Posterior vena cava (tissue), 2 donors: ENCODE measurements at regions of chr5 and their contacts with region 1.

Region 1: DNA sequence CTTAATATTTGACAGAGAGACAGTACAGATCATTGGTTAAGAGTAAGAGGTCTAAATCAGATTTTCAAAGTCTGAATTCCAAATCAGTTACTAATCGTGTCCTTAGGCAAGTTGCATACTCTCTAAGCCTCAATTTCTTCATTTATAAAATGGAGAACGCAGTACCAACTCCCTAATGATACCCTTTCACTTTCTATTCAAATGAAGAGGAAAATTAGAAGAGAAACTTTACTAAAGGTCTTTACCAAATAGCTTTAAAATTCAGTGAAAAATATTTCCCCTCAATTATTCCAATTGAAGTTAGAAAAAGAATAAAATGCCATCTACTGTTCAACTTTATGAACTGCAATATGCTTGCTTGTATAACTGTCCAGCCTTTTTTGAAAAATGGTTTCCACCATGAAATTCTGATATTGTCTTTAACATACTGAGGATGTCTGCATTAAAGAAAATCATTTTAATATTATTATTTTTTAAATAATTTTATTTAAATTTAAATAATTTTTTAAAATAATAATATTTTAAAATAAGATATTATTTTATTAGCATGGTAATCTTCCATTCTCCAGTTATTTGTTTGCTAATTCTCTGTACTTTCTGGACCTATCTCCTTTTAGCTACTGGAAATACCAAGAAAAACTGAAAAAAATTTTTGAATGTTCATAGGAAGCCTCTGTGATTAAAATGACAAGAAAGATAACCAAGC is 36.0 kb downstream of the POC5 start:
- DNase-seq: no peak

Region 2: GRCh38 chr5:75236322-75237316 is 444.7 kb before region 1 on chr5 and contains the start of gene ANKRD31:
- intact Hi-C with region 1: loop called in 1 of 2 experiments (anchors 10 kb)
- DNase-seq: peak; percentile 97
- total RNA-seq, gene ANKRD31: 0.19 to 0.42 TPM

Region 3: GRCh38 chr5:75640395-75640794 is 40.9 kb before region 1 on chr5:
- intact Hi-C with region 1: no loop called
- DNase-seq: no peak

Region 4: GRCh38 chr5:75656311-75657003 is 24.8 kb before region 1 on chr5:
- intact Hi-C with region 1: no loop called
- DNase-seq: no peak